ENCODE measurements at regions of chr22 and their contacts with region 1.

Region 1: DNA sequence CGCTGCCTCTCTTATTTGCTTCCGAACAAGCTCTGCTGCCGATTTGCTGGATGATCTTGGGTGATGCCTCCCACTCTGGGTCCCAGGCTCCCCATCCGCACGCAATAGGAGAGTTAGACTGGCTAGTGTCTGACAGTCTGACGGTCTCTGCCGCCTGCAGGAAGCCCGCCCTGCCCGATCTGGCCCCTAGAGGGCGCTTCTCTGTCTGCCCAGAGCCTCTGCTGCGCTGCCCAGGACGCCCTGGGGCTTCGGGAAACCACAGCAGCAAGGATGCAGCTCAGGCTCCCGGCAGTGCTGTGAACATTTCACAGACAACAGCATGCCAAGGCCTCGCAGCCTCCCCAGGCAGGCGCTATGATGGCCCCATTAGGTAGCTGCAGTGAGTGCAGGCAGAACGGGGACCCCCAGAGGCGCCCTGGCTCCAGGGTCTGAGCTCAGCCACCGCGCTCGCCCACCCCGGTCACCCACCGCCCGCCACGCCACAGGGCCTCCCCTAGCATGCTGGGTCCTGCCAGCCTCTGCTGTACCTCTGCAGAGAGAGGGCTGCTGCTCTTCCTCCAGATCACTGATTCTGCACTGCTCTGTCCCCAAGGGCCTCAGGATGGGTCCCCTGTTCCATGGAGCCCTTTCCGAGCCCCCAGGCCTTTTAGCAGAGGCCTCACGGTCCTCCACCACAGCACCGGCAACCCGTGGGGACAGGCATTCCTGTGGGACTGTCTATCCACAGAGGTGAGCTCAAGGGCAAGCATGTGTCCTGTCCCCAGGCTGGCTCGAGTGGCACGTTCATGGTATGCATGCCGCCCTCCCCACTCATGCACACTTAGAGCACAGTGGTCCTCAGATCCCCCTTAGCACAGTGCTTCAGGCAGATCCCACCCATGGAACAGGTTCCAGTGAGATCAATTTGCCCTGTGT is 4.3 kb upstream of the BAIAP2L2 start:
- DNase-seq: peak; percentile 95
- ATAC-seq: peak; percentile 90
- H3K4me3 Mint-ChIP-seq: no peak overlapping the region
- H3K27ac Mint-ChIP-seq: 0 out of 2 replicates have a peak overlapping the region, but pooled peaks have one; percentile 27
- H3K4me1 Mint-ChIP-seq: peaks cover 7% of the 10 kb centered on the region
- H3K27me3 Mint-ChIP-seq: no peaks in the 10 kb centered on the region; the same call in 1 of the 2 replicates
- CTCF ChIP-seq: peak; percentile 95

Region 2: DNA sequence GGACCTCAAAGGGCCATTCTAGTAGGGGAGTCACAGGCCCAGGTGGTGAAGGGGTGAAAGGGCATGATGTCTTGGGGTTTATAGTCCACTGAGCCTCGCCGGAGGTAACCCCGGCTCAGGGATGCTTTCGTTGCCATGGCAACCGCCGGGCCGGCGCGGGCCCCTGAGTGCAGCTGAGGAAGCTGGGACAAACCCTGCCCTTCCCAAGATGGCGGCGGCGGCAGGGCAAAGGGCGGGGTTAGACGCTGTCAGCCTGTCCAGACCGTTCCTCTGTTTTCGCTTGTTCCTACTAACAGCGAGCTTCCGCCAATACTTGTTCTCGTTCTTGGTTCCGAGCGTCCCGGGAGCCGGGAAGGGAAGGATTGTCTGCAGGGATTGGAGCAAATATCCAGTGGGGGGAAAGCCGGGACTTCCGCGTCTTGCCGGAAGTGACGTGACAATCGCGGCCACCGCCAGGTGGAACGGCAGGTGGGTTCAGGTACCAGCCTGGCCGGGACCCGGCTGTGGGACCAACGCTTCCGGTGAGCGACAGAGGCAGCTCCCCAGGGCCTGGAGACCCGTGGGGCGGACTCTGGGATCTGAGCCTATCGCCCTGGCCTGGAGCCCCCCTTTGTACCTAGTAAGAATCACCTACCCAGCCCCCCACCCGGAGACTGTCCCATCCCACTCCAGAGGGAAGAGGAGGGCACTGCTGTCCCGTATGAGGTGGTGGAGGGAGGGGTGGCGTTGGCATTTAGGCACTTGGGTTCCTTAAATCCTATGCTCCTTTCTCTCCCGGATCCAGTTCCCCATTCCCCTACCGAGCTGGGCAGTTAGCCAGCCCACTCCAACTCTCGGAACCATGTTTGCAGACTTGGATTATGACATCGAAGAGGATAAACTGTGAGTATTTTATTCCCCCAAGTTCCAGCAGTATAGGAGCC is 57.5 kb before region 1 on chr22 and contains the start of gene PICK1:
- CTCF ChIA-PET with region 1: interaction called, 35 read pairs
- POLR2A ChIA-PET with region 1: no interaction called
- DNase-seq: peak; percentile 95
- ATAC-seq: peak; percentile 78
- H3K4me3 Mint-ChIP-seq: peak within 1 kb of the TSS; percentile 94
- H3K27ac Mint-ChIP-seq: peak within 1 kb of the TSS; percentile 100
- H3K4me1 Mint-ChIP-seq: peaks cover 10% of the 10 kb centered on the region
- H3K27me3 Mint-ChIP-seq: no peaks in the 10 kb centered on the region; the same call in 1 of the 2 replicates
- CTCF ChIP-seq: no peak
- total RNA-seq, gene PICK1: 28.1 to 33.4 TPM (median 28.2 TPM) in 3 replicates

Region 3: DNA sequence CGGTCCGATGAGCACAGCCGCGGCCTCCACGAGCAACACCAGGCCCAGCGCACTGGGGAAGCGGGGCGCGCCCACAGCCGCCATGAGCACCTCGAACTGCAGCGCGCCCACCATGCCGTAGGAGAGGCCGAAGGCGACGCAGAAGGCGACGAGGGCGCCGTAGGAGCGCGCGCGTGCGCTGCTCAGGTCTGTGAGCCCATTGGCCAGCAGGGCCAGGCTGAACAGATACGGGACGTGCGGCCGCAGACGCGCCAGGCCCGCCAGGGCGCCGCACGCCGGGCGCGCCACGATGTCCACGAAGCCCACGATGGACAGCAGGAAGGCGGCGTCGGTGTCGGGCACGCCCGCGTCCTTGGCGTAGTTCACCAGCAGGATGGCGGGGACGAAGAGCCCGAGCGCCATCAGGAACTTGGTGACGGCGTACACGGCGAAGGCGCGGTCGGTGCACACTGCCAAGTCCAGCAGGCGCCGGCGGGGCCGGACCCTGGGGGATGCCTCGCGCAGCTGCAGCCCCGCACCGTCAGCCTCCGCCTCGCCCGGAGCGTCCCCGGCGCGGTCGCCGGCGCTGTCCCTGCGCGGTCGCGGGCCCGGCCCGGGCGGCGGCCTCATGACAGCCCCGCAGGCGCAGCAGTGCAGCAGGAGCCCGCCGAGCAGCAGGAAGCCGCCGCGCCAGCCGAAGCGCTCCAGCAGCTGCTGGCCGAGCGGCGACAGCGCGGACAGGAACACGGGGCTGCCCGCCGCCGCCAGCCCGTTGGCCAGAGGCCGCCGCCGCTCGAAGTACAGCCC is 33.7 kb before region 1 on chr22:
- CTCF ChIA-PET with region 1: interaction called, 13 read pairs
- POLR2A ChIA-PET with region 1: no interaction called
- DNase-seq: peak; percentile 68
- ATAC-seq: peak; percentile 65
- H3K4me3 Mint-ChIP-seq: peak overlapping the region; percentile 38; the same call in 1 of the 2 replicates
- H3K27ac Mint-ChIP-seq: no peak overlapping the region
- H3K4me1 Mint-ChIP-seq: peaks cover 4% of the 10 kb centered on the region; the same call in 1 of the 2 replicates
- H3K27me3 Mint-ChIP-seq: peaks cover 24% of the 10 kb centered on the region
- CTCF ChIP-seq: no peak

Region 4: GRCh38 chr22:38104084-38104483 is 10.7 kb before region 1 on chr22:
- CTCF ChIA-PET with region 1: interaction called, 222 read pairs
- POLR2A ChIA-PET with region 1: no interaction called
- DNase-seq: peak; percentile 62
- ATAC-seq: peak; percentile 86
- H3K4me3 Mint-ChIP-seq: no peak overlapping the region
- H3K27ac Mint-ChIP-seq: peak overlapping the region; percentile 90; the same call in 1 of the 2 replicates
- H3K4me1 Mint-ChIP-seq: no peaks in the 10 kb centered on the region
- H3K27me3 Mint-ChIP-seq: 0 out of 2 replicates have a peak, but pooled peaks cover 2% of the 10 kb centered on the region
- CTCF ChIP-seq: no peak; the same call in 1 of the 2 replicates

Region 5: GRCh38 chr22:38151126-38151500 is 36.4 kb after region 1 on chr22:
- CTCF ChIA-PET with region 1: interaction called, 45 read pairs
- POLR2A ChIA-PET with region 1: no interaction called
- DNase-seq: no peak
- ATAC-seq: no peak
- H3K4me3 Mint-ChIP-seq: no peak overlapping the region
- H3K27ac Mint-ChIP-seq: no peak overlapping the region
- H3K4me1 Mint-ChIP-seq: peaks cover 18% of the 10 kb centered on the region
- H3K27me3 Mint-ChIP-seq: no peaks in the 10 kb centered on the region
- CTCF ChIP-seq: no peak

Region 6: DNA sequence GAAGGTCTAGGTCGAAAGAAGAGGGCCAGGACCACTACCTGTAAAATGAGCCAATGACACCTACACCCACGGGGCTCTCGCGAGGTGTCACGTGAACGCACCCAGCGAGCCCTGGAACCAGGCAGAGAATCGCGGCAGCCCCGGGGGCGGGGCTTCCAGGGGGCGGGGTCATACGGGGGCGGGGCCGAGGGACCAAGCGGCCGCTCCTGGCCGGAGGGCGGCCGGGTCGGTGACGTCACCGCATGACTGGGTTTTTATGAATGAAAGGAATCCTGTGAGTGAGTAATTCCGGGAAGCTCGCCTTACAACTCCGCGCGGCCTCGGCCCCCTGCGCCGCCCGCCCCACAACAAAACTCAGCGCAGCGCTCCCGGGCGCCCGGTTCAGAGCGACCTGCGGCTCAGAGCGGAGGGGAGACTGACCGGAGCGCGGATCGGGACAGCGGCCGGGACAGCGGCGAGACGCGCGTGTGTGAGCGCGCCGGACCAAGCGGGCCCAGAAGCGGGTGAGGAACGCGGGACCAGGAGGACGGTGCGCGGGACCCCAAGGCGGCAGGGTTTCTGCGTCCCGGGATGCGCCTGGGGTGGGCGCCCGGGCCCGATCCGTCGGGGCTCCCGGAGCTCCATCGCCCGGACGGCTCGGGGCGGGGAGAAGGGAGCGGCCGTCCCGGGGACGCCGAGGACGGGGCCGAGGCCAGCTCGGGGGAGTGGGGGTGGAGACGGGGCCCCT is 87.1 kb after region 1 on chr22 and contains the start of gene MAFF:
- CTCF ChIA-PET with region 1: interaction called, 10 read pairs
- POLR2A ChIA-PET with region 1: no interaction called
- DNase-seq: peak; percentile 96
- ATAC-seq: peak; percentile 68
- H3K4me3 Mint-ChIP-seq: peak within 1 kb of the TSS; percentile 83
- H3K27ac Mint-ChIP-seq: peak within 1 kb of the TSS; percentile 25
- H3K4me1 Mint-ChIP-seq: peaks cover 12% of the 10 kb centered on the region
- H3K27me3 Mint-ChIP-seq: peaks cover 54% of the 10 kb centered on the region
- CTCF ChIP-seq: no peak
- total RNA-seq, gene MAFF: 4.6 to 6.1 TPM (median 5.7 TPM) in 3 replicates

Region 7: GRCh38 chr22:38240734-38241252 is 126.1 kb after region 1 on chr22:
- CTCF ChIA-PET with region 1: interaction called, 10 read pairs
- POLR2A ChIA-PET with region 1: no interaction called
- DNase-seq: peak; percentile 71
- ATAC-seq: peak; percentile 91
- H3K4me3 Mint-ChIP-seq: no peak overlapping the region
- H3K27ac Mint-ChIP-seq: peak overlapping the region; percentile 87
- H3K4me1 Mint-ChIP-seq: peaks cover 15% of the 10 kb centered on the region
- H3K27me3 Mint-ChIP-seq: no peaks in the 10 kb centered on the region
- CTCF ChIP-seq: no peak

Measured in WTC11 (cell line).